ENCODE measurements at regions of chr1 and their contacts with region 1.

Region 1: GRCh38 chr1:41573785-41574713 is 89.6 kb upstream of the EDN2 start:
- DNase-seq: peak; percentile 80
- H3K4me3 ChIP-seq: no peak overlapping the region
- H3K27ac ChIP-seq: no peak overlapping the region
- H3K4me1 ChIP-seq: peaks cover 10% of the 10 kb centered on the region
- CTCF ChIP-seq: peak; percentile 91

Region 2: GRCh38 chr1:41516168-41517061 is 57.6 kb before region 1 on chr1:
- CTCF ChIA-PET with region 1: no interaction called
- POLR2A ChIA-PET with region 1: no interaction called
- intact Hi-C with region 1: loop called (anchors 1 kb)
- DNase-seq: peak; percentile 54
- H3K4me3 ChIP-seq: no peak overlapping the region
- H3K27ac ChIP-seq: no peak overlapping the region
- H3K4me1 ChIP-seq: no peaks in the 10 kb centered on the region
- CTCF ChIP-seq: peak; percentile 86

Region 3: GRCh38 chr1:41540886-41541591 is 33.0 kb before region 1 on chr1:
- CTCF ChIA-PET with region 1: no interaction called
- POLR2A ChIA-PET with region 1: no interaction called
- intact Hi-C with region 1: no loop called
- DNase-seq: no peak
- H3K4me3 ChIP-seq: no peak overlapping the region
- H3K27ac ChIP-seq: no peak overlapping the region
- H3K4me1 ChIP-seq: peaks cover 16% of the 10 kb centered on the region
- CTCF ChIP-seq: no peak

Region 4: DNA sequence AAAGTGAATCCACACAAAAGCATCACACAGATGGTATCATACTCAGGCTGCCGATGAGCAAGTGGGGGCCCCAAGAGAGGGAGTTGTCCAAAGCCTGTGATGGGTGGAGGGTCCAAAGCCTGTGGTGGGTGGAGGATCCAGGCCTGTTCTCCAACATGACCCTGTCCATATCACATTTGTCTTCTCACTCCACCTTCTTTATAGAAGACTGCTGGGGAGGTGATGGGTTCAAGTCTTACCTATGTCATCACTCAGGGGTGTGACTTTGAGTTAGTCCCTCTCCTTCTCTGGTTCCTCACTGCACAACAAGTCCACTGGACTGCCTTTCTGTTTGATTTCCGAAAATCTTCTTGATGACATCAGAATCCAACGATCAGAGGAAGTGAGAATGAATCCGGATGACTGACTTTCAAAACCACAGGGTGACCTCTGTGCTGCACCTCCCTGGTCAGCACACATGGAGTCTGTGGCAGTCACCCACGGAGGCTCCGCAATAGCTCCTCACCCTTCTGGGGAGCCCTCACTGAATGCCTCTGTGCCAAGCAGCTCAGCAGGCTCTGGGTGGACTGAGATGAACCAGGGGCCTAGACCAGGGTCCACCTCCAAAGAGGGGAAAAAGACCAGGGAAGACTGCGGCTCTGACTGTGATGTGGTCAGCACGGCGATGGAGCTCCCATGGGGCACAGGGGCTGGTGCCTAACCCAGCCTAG is 177.9 kb after region 1 on chr1:
- CTCF ChIA-PET with region 1: no interaction called
- POLR2A ChIA-PET with region 1: no interaction called
- intact Hi-C with region 1: loop called (anchors 10 kb)
- DNase-seq: peak; percentile 25
- H3K4me3 ChIP-seq: peak overlapping the region; percentile 7
- H3K27ac ChIP-seq: peak overlapping the region; percentile 63
- H3K4me1 ChIP-seq: peaks cover 46% of the 10 kb centered on the region
- CTCF ChIP-seq: no peak

Region 5: DNA sequence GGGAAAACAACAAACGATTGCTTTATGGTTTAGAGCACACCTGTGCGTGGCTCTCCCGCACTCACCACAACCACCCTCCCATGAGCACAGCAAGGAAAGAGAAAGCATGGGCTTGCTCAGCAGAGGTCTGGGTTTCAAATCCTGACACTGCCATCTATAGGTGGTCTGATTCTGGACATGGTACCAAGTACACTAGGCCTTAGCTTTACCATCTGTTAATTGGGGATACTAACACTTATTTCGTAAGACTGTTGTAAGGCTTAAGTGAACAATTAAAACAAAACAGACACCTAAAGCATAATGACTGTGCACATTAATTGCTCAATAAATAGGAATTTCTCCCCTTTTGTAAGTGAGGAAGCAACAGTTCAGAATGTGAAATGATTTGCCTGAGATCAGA is 294.6 kb after region 1 on chr1:
- CTCF ChIA-PET with region 1: interaction called, 10 read pairs
- POLR2A ChIA-PET with region 1: no interaction called
- intact Hi-C with region 1: loop called (anchors 1 kb)
- DNase-seq: peak; percentile 34
- H3K4me3 ChIP-seq: no peak overlapping the region
- H3K27ac ChIP-seq: no peak overlapping the region
- H3K4me1 ChIP-seq: no peaks in the 10 kb centered on the region
- CTCF ChIP-seq: peak; percentile 64

Region 6: DNA sequence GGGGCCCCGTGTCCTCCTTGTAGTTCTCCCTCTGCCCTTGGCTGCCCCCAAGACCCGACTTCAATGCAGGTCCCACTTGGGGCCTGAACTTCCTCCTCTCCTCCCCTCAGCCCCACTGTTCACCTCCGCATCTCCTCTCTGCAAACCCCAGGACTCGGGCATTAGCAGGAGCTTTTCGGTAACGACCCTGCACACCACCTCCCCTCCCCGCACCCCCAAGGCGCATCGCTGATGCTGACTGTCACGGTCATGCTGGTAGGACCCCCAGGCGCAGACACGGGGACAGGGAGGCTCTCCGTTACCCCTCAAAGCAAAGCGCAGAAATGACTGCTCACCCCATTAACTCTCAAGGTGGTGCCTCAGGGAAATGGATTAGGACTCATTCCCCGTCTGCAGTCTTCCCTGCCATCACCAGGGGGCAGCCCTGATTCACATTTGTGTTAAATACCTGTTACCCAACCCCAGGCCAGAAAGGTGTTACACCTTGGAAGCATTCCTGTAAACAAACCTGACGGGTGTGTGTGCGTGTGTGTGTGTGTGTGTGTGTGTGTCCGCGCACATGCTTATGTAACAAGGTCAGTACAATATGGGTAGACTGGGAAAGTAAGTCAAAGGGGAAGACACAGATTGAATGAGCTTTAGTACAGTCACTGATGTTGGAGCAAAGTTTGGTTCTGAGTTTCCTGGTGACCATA is 572.7 kb after region 1 on chr1:
- CTCF ChIA-PET with region 1: no interaction called
- POLR2A ChIA-PET with region 1: no interaction called
- intact Hi-C with region 1: loop called (anchors 5 kb)
- DNase-seq: peak; percentile 63
- H3K4me3 ChIP-seq: no peak overlapping the region
- H3K27ac ChIP-seq: no peak overlapping the region
- H3K4me1 ChIP-seq: no peaks in the 10 kb centered on the region
- CTCF ChIP-seq: peak; percentile 83